Lower leg skin (tissue), 4 donors: ENCODE measurements at regions of chr11 and their contacts with region 1.

Region 1: DNA sequence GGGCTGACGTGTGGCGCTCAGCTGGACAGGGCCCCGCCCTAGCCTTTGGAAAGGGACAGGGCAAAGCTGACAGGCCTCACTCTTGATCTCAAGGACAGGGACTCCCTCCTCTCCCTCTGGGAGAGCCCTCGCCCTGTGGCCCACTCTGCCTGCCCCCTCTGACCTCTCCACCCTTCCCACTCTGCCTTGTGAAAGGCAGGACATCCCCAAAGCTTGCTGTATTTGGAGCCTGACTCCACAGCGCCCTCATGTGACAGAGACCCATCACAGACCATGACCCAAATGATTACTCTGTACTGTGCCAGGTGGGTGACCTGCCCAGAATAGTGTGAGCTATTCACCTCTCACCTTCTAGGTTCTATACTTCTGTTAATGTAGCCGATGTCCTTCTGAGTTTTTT is 18.8 kb downstream of the P2RY2 start:
- DNase-seq: no peak
- H3K4me3 ChIP-seq: no peak overlapping the region
- CTCF ChIP-seq: no peak
- POLR2A ChIP-seq: no peak

Region 2: DNA sequence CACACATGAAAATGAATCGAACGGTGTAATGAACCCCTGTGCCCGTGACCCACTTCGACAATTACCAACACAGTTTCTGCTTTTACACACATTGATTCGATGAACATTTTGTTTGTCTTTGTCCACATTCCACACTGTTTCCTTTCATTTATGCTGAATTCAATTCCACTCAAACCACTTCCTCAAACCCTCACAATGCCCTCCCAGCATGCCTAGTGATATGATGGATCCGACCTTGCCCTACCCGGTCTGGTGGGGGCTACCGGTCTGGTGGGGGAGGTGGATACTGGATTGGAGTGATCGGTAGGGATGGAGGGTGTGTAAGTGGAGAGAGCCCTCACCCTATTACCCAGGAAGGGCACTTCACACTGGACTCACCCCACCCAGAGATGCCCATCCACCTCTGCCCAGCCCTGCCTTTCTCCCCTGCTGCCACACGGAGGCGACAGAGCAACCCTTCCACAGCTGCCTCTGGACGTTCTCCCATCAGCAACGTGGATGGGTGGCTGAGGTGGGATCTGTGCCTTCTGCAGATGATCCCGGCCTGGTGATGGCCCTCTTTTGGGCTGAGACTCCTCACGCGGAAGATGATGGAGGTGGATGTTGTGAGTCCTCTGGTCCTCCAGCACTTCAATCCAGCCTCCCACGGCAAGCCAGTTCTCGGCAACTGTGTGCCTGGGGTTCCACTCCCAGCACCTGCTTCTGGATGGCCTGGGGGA is 51.7 kb before region 1 on chr11:
- intact Hi-C with region 1: loop called (anchors 10 kb)
- DNase-seq: peak; percentile 54 to 92
- H3K4me3 ChIP-seq: no peak overlapping the region
- CTCF ChIP-seq: no peak
- POLR2A ChIP-seq: no peak

Region 3: GRCh38 chr11:73257342-73258103 is 20.7 kb after region 1 on chr11:
- intact Hi-C with region 1: no loop called
- DNase-seq: peak in 1 of 2 donors; percentile 83
- H3K4me3 ChIP-seq: no peak overlapping the region
- CTCF ChIP-seq: no peak
- POLR2A ChIP-seq: no peak

Region 4: GRCh38 chr11:73281781-73282660 is 45.2 kb after region 1 on chr11:
- intact Hi-C with region 1: loop called (anchors 1 kb)
- DNase-seq: no peak
- H3K4me3 ChIP-seq: no peak overlapping the region
- CTCF ChIP-seq: no peak
- POLR2A ChIP-seq: no peak

Region 5: DNA sequence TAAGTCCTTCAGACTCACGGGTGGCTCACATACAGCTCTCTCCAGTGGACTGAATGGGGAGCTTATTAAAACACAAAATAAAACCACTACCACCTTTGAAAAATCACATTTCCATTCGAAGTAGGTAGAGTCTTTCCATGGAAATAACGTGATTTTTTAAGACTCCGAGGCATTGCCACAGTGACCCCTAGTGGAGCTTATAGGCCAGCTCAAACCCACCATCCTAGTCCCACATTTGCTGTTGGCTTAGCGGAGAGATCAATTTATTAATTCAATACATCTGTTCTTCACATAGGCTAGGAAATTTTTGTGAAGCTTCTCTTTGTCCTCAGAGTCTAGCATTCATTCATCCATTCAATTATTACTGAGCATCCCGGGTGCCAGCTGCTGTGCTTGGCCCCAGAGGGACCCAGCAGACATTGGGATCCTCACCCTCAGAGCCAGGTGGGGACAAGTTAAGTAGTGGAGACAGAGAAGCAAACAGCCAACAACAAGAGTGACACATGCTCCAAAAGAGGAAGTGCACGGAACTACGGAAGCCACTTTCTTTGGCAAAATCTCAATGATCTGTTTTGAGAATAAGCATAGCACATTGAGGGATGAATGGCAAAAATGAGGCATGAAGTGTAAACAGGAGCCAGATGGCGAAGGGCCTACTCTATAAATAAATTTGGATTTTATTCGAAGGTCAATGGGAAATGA is 1084.8 kb after region 1 on chr11:
- intact Hi-C with region 1: no loop called
- DNase-seq: peak in 1 of 2 donors; percentile 33
- H3K4me3 ChIP-seq: no peak overlapping the region
- CTCF ChIP-seq: no peak
- POLR2A ChIP-seq: no peak

Region 6: GRCh38 chr11:74956397-74957015 is 1719.7 kb after region 1 on chr11:
- intact Hi-C with region 1: no loop called
- DNase-seq: no peak
- H3K4me3 ChIP-seq: no peak overlapping the region
- CTCF ChIP-seq: no peak
- POLR2A ChIP-seq: no peak